HepG2 (cell line): ENCODE measurements at regions of chr2 and their contacts with region 1.

Region 1: GRCh38 chr2:230987137-230988020 is 8.5 kb upstream of the SPATA3 start:
- DNase-seq: peak; percentile 71
- ATAC-seq: peak; percentile 93
- H3K4me3 ChIP-seq: peak overlapping the region; percentile 51 to 75 (median 53)
- H3K27ac ChIP-seq: no peak overlapping the region
- H3K4me1 ChIP-seq: peaks cover 40% of the 10 kb centered on the region
- H3K27me3 ChIP-seq: peaks cover 1 to 25% of the 10 kb centered on the region in 2 experiments; a peak in 3 of 5 replicates
- CTCF ChIP-seq: peak; percentile 99
- EP300 ChIP-seq: no peak
- POLR2A ChIP-seq: no peak
- RAD21 ChIP-seq: peak; percentile 99

Region 2: GRCh38 chr2:230824406-230824978 is 162.9 kb before region 1 on chr2:
- CTCF ChIA-PET with region 1: interaction called, 15 read pairs
- POLR2A ChIA-PET with region 1: no interaction called
- in situ Hi-C with region 1: loop called (anchors 5 kb)
- intact Hi-C with region 1: loop called (anchors 1 kb)
- DNase-seq: peak; percentile 87
- ATAC-seq: peak; percentile 91
- H3K4me3 ChIP-seq: peak overlapping the region in 2 of 3 experiments; percentile 28 to 36; a peak in 2 of 6 replicates
- H3K27ac ChIP-seq: no peak overlapping the region
- H3K4me1 ChIP-seq: no peaks in the 10 kb centered on the region
- H3K27me3 ChIP-seq: peaks cover 2 to 24% of the 10 kb centered on the region in 2 experiments; a peak in 4 of 5 replicates
- CTCF ChIP-seq: peak; percentile 89
- EP300 ChIP-seq: no peak
- POLR2A ChIP-seq: no peak
- RAD21 ChIP-seq: peak; percentile 81

Region 3: GRCh38 chr2:230847883-230848388 is 139.4 kb before region 1 on chr2:
- CTCF ChIA-PET with region 1: interaction called, 5 read pairs
- POLR2A ChIA-PET with region 1: interaction called, 3 read pairs
- in situ Hi-C with region 1: no loop called
- intact Hi-C with region 1: loop called (anchors 1 kb)
- DNase-seq: peak; percentile 70
- ATAC-seq: peak; percentile 94
- H3K4me3 ChIP-seq: peak overlapping the region in 1 of 3 experiments; percentile 35; a peak in 2 of 6 replicates
- H3K27ac ChIP-seq: no peak overlapping the region
- H3K4me1 ChIP-seq: peaks cover 14% of the 10 kb centered on the region
- H3K27me3 ChIP-seq: peaks cover 0 to 34% of the 10 kb centered on the region in 2 experiments; a peak in 3 of 5 replicates
- CTCF ChIP-seq: peak; percentile 92
- EP300 ChIP-seq: no peak
- POLR2A ChIP-seq: no peak
- RAD21 ChIP-seq: peak; percentile 86

Region 4: GRCh38 chr2:230902180-230902899 is 85.0 kb before region 1 on chr2:
- CTCF ChIA-PET with region 1: interaction called, 40 read pairs
- POLR2A ChIA-PET with region 1: no interaction called
- in situ Hi-C with region 1: loop called (anchors 5 kb)
- intact Hi-C with region 1: loop called (anchors 1 kb)
- DNase-seq: peak; percentile 56
- ATAC-seq: peak; percentile 64
- H3K4me3 ChIP-seq: no peak overlapping the region
- H3K27ac ChIP-seq: no peak overlapping the region
- H3K4me1 ChIP-seq: peaks cover 12% of the 10 kb centered on the region
- H3K27me3 ChIP-seq: peaks cover 6 to 66% of the 10 kb centered on the region in 2 experiments
- CTCF ChIP-seq: peak; percentile 92
- EP300 ChIP-seq: no peak
- POLR2A ChIP-seq: no peak
- RAD21 ChIP-seq: peak; percentile 76

Region 5: DNA sequence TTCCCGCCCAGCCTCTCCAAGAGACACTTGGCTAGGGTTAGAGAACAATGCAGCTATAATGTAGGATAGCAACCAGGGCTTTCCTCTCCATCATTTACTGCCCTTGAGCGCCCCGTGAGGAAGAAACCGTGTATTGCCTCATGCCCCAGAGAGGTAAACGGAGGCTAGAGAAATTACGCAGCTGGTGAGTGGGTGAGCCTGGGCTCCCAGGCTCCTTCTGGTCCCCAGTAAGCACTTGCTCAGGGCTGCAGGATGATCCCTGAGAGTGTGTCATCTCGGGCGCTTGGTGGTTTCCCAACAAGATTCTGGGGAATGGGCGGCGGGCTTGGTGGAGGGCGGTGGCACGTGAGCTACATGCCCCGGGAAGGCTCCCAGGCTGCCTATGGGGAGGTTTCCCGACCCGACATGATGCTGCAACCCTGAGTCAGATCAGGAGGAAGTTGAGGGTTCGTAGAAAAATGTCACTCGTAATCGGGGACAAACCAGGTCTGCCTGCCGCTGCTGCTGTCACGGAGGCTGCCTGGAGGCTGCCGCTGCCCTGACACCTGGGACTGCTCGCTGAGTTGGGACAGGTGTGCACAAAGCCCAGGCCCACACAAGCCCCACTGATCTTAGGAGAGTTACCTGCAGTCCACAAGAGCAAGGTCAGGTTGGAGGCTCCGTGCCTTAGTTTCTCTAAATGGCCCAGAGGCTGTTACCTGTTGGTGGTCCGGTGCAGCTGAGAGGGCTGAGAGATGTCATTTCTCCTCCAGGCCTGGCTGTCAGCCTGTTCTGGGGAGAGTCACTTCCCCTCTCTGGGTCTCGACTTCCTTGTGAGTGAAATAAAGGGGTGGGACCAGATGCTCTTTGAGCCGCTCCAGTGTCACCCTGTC is 62.7 kb before region 1 on chr2 and contains the start of gene GPR55:
- CTCF ChIA-PET with region 1: no interaction called
- POLR2A ChIA-PET with region 1: no interaction called
- in situ Hi-C with region 1: no loop called
- intact Hi-C with region 1: loop called (anchors 1 kb)
- DNase-seq: no peak
- ATAC-seq: peak; percentile 20
- H3K4me3 ChIP-seq: no peak within 1 kb of the TSS
- H3K27ac ChIP-seq: no peak within 1 kb of the TSS
- H3K4me1 ChIP-seq: no peaks in the 10 kb centered on the region
- H3K27me3 ChIP-seq: peaks cover 2 to 60% of the 10 kb centered on the region in 2 experiments; a peak in 4 of 5 replicates
- CTCF ChIP-seq: peak; percentile 30
- EP300 ChIP-seq: no peak
- POLR2A ChIP-seq: no peak
- RAD21 ChIP-seq: no peak
- total RNA-seq, gene GPR55: not detected in 2 replicates